Activated CD8-positive, alpha-beta T cell treated with anti-CD3 and anti-CD28 coated beads for 36 hours (primary cell): ENCODE measurements at regions of chr12 and their contacts with region 1.

Region 1: GRCh38 chr12:27644158-27644845 is 51.9 kb upstream of the REP15 start:
- DNase-seq: no peak
- ATAC-seq: no peak
- H3K4me3 Mint-ChIP-seq: no peak overlapping the region
- H3K27ac Mint-ChIP-seq: no peak overlapping the region
- H3K4me1 Mint-ChIP-seq: no peaks in the 10 kb centered on the region
- H3K27me3 Mint-ChIP-seq: no peaks in the 10 kb centered on the region
- CTCF ChIP-seq: no peak

Region 2: DNA sequence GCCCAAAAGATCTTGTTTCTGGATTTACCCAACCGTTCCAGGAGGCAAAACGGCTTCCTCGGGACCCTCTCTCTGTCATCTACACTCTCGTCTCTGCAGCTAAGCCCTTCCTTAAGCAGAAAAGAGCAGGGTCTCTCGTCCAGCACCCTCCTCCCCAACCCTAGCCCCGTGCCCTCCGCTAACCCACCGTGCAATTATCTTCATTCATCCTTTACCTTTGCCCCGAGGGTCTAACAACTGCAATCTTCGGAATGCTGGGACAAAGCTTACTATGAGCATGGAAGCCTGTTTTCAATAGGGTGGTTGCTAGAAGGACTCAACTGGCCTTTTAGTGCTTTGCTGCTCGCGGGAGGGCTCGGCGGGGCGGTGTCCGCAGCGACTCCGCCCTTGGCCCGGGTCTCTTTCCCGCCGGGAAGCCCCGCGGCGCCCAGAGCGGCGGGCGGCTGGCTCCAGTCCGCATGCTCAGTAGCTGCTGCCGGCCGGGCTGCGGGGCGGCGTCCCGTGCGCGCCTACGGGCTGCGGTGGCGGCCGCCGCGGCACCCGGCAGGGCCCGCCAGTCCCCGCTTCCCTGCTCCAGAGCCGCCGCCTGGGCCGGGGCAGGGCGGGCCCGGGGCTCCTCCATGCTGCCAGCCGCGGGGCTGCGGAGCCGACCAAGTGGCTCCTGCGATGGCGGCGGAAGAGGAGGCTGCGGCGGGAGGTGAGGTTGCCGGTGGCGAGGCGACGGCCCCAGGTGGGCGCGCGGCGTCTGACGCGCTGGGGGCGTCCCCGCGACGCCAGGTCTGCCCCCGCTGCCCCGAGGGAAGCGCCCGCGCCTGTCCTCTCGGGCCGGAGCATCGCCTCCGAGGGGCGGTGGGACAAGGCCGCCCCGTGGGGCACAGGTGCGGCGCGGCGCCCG is 311.6 kb before region 1 on chr12 and contains the start of gene BMAL2:
- CTCF ChIA-PET with region 1: no interaction called
- POLR2A ChIA-PET with region 1: no interaction called
- intact Hi-C with region 1: loop called (anchors 5 kb)
- DNase-seq: peak; percentile 56
- ATAC-seq: peak; percentile 52
- H3K4me3 Mint-ChIP-seq: peak within 1 kb of the TSS; percentile 91
- H3K27ac Mint-ChIP-seq: peak within 1 kb of the TSS; percentile 84
- H3K4me1 Mint-ChIP-seq: peaks cover 36% of the 10 kb centered on the region
- H3K27me3 Mint-ChIP-seq: peaks cover 37% of the 10 kb centered on the region
- CTCF ChIP-seq: no peak
- total RNA-seq, gene BMAL2: 7.5 to 9.7 TPM